Astrocyte of the cerebellum (primary cell): ENCODE measurements at regions of chr4 and their contacts with region 1.

Region 1: GRCh38 chr4:2565533-2565932 is 29.1 kb downstream of the FAM193A start:
- DNase-seq: no peak
- H3K4me3 ChIP-seq: no peak overlapping the region
- CTCF ChIP-seq: no peak

Region 2: GRCh38 chr4:2497931-2498330 is 67.6 kb before region 1 on chr4:
- in situ Hi-C with region 1: loop called (anchors 5 kb)
- DNase-seq: no peak
- H3K4me3 ChIP-seq: no peak overlapping the region
- CTCF ChIP-seq: no peak

Region 3: GRCh38 chr4:2608291-2608690 is 42.8 kb after region 1 on chr4:
- in situ Hi-C with region 1: no loop called
- DNase-seq: no peak
- H3K4me3 ChIP-seq: no peak overlapping the region
- CTCF ChIP-seq: no peak